Cardiac septum (tissue), 1 donor: ENCODE measurements at regions of chr5 and their contacts with region 1.

Region 1: DNA sequence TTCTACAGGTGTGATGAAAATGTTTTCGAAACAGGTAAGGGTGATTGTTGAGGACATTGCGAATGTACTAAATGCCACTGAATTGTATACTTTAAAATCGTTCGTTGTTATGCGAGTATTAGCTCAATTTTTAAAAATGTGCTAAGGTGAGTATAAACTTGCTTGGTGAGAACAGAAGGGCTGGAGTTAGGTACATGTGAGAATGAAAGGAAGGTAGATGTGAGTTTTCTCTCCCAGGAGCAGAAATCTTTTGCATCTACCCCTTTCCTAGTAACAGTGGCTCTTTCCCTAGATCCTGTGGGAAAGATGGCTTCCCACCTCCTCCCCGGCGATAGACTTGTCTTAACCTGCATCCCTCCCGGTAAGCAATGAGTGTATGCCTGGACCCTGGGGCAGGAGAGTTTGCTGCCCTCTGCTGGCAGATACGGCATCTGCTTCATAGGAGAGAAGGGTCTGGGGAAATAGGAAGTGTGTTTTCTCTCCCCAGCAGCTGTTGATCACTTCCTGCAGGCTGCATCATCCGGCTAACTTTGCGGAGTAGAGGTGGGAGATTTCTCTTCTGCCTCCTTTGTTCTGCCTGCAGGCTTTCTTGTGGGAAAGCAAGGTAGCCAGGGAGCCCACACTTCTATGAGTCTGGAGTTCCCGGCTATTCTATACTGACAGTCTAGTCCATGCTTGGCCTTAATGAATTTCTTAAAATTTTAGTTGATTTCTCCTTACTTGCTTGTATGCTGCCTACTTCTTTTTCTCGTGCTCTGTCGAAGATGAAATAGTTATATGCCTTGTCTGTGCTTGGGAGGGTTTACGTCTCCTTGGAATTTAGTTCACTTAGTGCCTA is 373.3 kb upstream of the SEMA6A start:
- DNase-seq: peak; percentile 81

Region 2: GRCh38 chr5:116137544-116138378 is 810.1 kb before region 1 on chr5:
- intact Hi-C with region 1: loop called (anchors 10 kb)
- DNase-seq: no peak